ENCODE measurements at regions of chr21 and their contacts with region 1.

Region 1: DNA sequence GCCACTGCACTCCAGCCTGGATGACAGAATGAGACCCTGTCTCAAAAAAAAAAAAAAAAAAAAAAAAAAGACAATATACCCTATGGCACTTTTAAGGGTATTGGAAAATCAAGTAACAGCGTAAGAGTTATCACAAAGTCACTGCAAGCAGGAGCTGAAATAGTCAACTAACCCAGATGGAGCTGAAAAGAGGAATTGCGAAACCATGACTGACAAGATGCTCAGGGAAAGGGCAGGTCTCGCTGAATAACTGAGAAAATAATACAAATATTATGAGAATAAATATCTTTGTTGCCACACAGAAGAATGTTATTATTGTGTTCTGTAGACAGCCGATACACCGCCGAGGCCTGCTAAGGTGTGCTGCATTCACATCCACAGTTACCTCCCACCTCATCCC is 17.8 kb downstream of the HLCS start:
- DNase-seq: no peak
- ATAC-seq: no peak
- H3K4me3 ChIP-seq: no peak overlapping the region
- H3K27ac ChIP-seq: no peak overlapping the region
- H3K4me1 ChIP-seq: no peaks in the 10 kb centered on the region
- H3K27me3 ChIP-seq: no peaks in the 10 kb centered on the region
- CTCF ChIP-seq: no peak

Region 2: GRCh38 chr21:36966066-36966820 is 17.6 kb after region 1 on chr21 and contains the start of gene HLCS:
- CTCF ChIA-PET with region 1: interaction called, 11 read pairs
- POLR2A ChIA-PET with region 1: no interaction called
- in situ Hi-C with region 1: no loop called
- intact Hi-C with region 1: no loop called
- DNase-seq: no peak
- ATAC-seq: peak; percentile 96
- H3K4me3 ChIP-seq: peak within 1 kb of the TSS; percentile 59 to 64
- H3K27ac ChIP-seq: peak within 1 kb of the TSS; percentile 84
- H3K4me1 ChIP-seq: peaks cover 11% of the 10 kb centered on the region
- H3K27me3 ChIP-seq: no peaks in the 10 kb centered on the region
- CTCF ChIP-seq: no peak; the same call in 1 of the 2 replicates
- total RNA-seq, gene HLCS: 15.3 TPM

Region 3: DNA sequence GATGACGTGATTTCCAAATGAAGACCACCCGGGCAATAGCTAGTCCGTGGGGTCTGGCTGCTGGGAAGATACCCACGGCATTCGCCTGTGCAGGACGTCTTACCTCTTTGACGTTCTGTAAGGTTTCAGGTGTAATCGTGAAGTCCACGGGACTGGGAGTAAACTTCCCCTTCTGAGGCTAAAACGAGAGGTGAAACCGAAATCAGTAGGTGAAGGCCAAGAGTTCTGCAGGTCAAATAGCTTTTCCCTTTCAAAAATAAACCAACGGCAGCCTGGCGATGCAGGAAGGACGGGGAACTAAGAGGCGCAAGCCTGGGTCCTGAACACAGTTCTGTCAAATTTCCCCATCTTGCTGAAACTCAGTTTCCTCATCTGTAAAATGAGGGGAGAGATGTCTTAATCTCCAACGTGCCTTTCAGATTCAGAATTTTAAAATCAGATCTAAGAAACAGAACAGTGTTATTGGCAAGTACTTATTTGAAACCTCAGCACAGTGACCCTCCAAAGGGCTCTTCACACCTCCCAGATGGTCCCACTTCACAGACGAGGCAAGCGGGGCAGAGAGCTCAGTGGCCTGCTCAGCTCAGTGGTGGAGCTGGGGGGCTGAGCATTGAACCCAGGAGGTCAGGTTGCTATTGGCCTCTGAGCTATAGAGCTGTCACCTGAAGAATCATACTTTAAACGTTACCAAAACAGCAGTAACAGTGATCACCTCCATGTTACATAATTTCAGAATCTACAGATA is 283.8 kb after region 1 on chr21:
- CTCF ChIA-PET with region 1: no interaction called
- POLR2A ChIA-PET with region 1: no interaction called
- in situ Hi-C with region 1: no loop called
- intact Hi-C with region 1: no loop called
- DNase-seq: no peak
- ATAC-seq: no peak
- H3K4me3 ChIP-seq: no peak overlapping the region
- H3K27ac ChIP-seq: no peak overlapping the region
- H3K4me1 ChIP-seq: no peaks in the 10 kb centered on the region
- H3K27me3 ChIP-seq: no peaks in the 10 kb centered on the region
- CTCF ChIP-seq: no peak